CD4-positive, alpha-beta T cell (primary cell): ENCODE measurements at regions of chr1 and their contacts with region 1.

Region 1: GRCh38 chr1:205255941-205256780 is 28.4 kb downstream of the TMCC2 start:
- DNase-seq: peak; percentile 75 to 90 (median 83)
- ATAC-seq: peak; percentile 99
- H3K4me3 ChIP-seq: no peak overlapping the region
- H3K4me3 Mint-ChIP-seq: no peak overlapping the region
- H3K27ac ChIP-seq: no peak overlapping the region
- H3K27ac Mint-ChIP-seq: no peak overlapping the region
- H3K4me1 ChIP-seq: peaks cover 6% of the 10 kb centered on the region
- H3K4me1 Mint-ChIP-seq: no peaks in the 10 kb centered on the region
- H3K27me3 ChIP-seq: peaks cover 0 to 2% of the 10 kb centered on the region in 2 experiments
- H3K27me3 Mint-ChIP-seq: no peaks in the 10 kb centered on the region
- CTCF ChIP-seq: peak; percentile 92

Region 2: DNA sequence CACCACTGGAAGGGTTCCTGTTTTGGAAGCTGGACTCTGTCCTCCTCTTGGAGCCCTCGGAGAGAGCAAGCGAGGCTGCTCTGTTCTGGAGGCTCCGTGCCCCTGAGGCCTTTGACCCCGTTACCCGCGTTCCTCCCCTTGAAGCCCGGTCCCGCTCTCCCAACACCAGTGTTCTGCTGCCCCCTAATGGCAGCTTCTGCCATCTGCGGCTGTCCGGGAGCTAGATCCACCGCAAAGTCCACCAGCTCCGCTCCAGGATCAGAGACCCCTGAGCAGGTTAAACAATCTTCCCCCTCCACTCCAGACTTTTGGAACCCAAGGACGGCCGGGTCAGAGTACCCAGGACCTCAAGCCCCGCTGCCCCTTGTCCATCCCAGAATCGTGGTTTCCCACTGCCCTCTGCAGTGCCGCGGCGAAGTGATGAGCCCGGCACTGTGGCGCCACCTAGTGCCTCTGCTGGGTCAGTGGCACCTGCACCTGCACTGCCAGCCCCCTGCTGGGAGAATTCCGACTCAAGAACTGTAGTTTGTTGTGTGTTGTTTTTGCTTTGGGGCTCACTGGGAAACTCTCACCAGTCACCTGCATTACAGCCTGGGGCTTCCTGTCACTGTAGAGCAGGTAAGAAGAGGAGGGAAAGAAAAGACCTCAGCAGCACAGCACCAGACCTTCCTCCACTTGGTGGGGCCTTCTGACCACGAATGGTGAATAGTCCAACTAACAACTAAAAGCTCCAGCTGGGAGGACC is 449.0 kb before region 1 on chr1:
- CTCF ChIA-PET with region 1: no interaction called
- POLR2A ChIA-PET with region 1: no interaction called
- intact Hi-C with region 1: loop called in 1 of 2 experiments (anchors 10 kb)
- DNase-seq: peak; percentile 68 to 91 (median 77)
- ATAC-seq: peak; percentile 95
- H3K4me3 ChIP-seq: peak overlapping the region; percentile 59
- H3K4me3 Mint-ChIP-seq: peak overlapping the region; percentile 92
- H3K27ac ChIP-seq: no peak overlapping the region
- H3K27ac Mint-ChIP-seq: no peak overlapping the region
- H3K4me1 ChIP-seq: peaks cover 20% of the 10 kb centered on the region
- H3K4me1 Mint-ChIP-seq: peaks cover 6% of the 10 kb centered on the region
- H3K27me3 ChIP-seq: no peaks in the 10 kb centered on the region
- H3K27me3 Mint-ChIP-seq: no peaks in the 10 kb centered on the region
- CTCF ChIP-seq: peak; percentile 100

Region 3: DNA sequence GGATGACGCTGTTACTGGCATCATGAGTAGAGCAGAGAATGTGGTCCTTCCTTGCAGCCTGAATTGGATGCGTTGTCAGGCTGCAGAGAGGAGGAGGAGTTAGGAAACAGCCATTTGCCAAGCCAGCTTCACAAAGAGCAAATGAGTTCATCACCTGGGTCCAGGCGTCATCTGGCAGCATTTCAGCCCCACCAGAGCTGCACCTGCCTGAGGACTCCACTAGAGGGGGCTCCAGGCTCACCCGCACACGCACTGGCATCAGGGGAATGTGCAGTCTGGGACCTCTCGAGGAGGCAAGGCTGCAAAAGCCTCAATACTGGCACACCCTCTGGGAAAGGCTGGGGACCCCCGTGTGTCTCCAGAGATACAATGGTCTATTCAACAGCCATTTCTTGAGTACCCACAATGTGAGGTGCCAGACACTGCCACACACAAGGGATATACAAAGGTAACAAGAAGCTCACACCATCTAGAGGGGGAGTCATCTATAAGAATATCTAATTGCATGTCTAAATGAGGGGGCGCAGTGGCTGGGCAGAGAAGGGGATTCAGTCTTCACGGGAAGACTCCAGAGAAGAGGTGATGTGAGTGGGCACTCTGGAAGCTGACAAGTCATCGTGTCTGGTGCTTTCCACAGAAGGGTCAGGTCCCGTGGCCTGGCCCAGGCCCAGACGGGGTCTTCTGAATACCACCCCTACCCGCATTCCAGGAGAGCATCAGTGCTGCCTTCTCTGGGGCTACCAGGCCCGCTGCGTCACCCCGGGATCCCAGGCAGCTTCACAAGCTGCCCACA is 266.7 kb before region 1 on chr1:
- CTCF ChIA-PET with region 1: interaction called, 9 read pairs
- POLR2A ChIA-PET with region 1: no interaction called
- intact Hi-C with region 1: loop called in 1 of 2 experiments (anchors 1 kb)
- DNase-seq: peak; percentile 7 to 71 (median 38)
- ATAC-seq: peak; percentile 77
- H3K4me3 ChIP-seq: no peak overlapping the region
- H3K4me3 Mint-ChIP-seq: no peak overlapping the region
- H3K27ac ChIP-seq: no peak overlapping the region
- H3K27ac Mint-ChIP-seq: no peak overlapping the region
- H3K4me1 ChIP-seq: peaks cover 11% of the 10 kb centered on the region
- H3K4me1 Mint-ChIP-seq: peaks cover 16% of the 10 kb centered on the region
- H3K27me3 ChIP-seq: peaks cover 0 to 2% of the 10 kb centered on the region in 2 experiments
- H3K27me3 Mint-ChIP-seq: no peaks in the 10 kb centered on the region
- CTCF ChIP-seq: peak; percentile 54

Region 4: DNA sequence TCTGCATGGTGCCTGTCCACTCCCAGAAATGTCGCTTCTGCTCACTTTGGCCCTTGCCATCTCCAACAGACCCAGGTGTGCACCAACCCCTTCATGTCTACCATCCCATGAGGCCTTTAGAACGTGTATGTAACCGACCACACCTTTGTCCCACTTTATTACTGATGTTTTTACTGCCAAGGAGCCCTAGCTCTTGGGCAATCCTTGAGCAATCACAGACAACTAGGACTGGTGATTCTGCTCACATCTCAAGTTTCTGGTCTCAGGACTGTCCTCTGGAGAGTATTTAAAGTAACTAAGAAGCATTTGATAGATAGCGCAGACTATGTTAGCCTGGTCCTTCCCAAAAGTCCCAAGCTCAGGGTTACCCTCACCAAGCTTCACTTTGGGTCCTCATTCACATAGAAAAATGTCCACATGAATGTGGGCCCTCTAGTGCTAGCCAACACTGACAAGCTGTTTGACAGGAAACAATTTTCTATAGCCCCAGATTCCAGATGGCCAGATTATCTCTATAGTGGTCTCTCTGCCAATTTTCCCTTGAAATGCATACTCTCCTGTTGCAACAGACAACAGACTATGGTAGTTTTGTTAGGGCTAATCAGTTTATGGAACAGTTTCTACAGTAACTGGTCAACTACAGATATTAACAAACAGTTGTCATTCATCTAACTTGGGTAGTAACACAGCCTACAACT is 165.0 kb before region 1 on chr1:
- CTCF ChIA-PET with region 1: no interaction called
- POLR2A ChIA-PET with region 1: no interaction called
- intact Hi-C with region 1: no loop called
- DNase-seq: no peak
- ATAC-seq: no peak
- H3K4me3 ChIP-seq: no peak overlapping the region
- H3K4me3 Mint-ChIP-seq: no peak overlapping the region
- H3K27ac ChIP-seq: no peak overlapping the region
- H3K27ac Mint-ChIP-seq: no peak overlapping the region
- H3K4me1 ChIP-seq: no peaks in the 10 kb centered on the region
- H3K4me1 Mint-ChIP-seq: no peaks in the 10 kb centered on the region
- H3K27me3 ChIP-seq: no peaks in the 10 kb centered on the region
- H3K27me3 Mint-ChIP-seq: no peaks in the 10 kb centered on the region
- CTCF ChIP-seq: no peak

Region 5: GRCh38 chr1:205121660-205122488 is 134.3 kb before region 1 on chr1 and contains the start of gene RBBP5:
- CTCF ChIA-PET with region 1: interaction called, 7 read pairs
- POLR2A ChIA-PET with region 1: interaction called, 5 read pairs
- intact Hi-C with region 1: loop called in 1 of 2 experiments (anchors 1 kb)
- DNase-seq: peak; percentile 93 to 99 (median 95)
- ATAC-seq: peak; percentile 91
- H3K4me3 ChIP-seq: peak within 1 kb of the TSS; percentile 79
- H3K4me3 Mint-ChIP-seq: peak within 1 kb of the TSS; percentile 94
- H3K27ac ChIP-seq: peak within 1 kb of the TSS; percentile 90 to 94
- H3K27ac Mint-ChIP-seq: peak within 1 kb of the TSS; percentile 98
- H3K4me1 ChIP-seq: peaks cover 32% of the 10 kb centered on the region
- H3K4me1 Mint-ChIP-seq: peaks cover 46% of the 10 kb centered on the region
- H3K27me3 ChIP-seq: no peaks in the 10 kb centered on the region
- H3K27me3 Mint-ChIP-seq: no peaks in the 10 kb centered on the region
- CTCF ChIP-seq: peak; percentile 57
- total RNA-seq, gene RBBP5: 14.8 to 15.6 TPM

Region 6: GRCh38 chr1:205227584-205228006 is 28.6 kb before region 1 on chr1 and contains the start of gene TMCC2:
- CTCF ChIA-PET with region 1: interaction called, 52 read pairs
- POLR2A ChIA-PET with region 1: interaction called, 26 read pairs
- intact Hi-C with region 1: loop called (anchors 1 kb)
- DNase-seq: peak; percentile 49 to 87 (median 74)
- ATAC-seq: peak; percentile 76
- H3K4me3 ChIP-seq: peak within 1 kb of the TSS; percentile 64
- H3K4me3 Mint-ChIP-seq: peak within 1 kb of the TSS; percentile 94
- H3K27ac ChIP-seq: no peak within 1 kb of the TSS
- H3K27ac Mint-ChIP-seq: peak within 1 kb of the TSS; percentile 4
- H3K4me1 ChIP-seq: peaks cover 31% of the 10 kb centered on the region
- H3K4me1 Mint-ChIP-seq: peaks cover 30% of the 10 kb centered on the region
- H3K27me3 ChIP-seq: peaks cover 5 to 8% of the 10 kb centered on the region in 2 experiments
- H3K27me3 Mint-ChIP-seq: peaks cover 22% of the 10 kb centered on the region
- CTCF ChIP-seq: no peak
- total RNA-seq, gene TMCC2: 0.74 to 1.1 TPM